ENCODE measurements at regions of chr1 and their contacts with region 1.

Region 1: GRCh38 chr1:163315773-163316374 is 5.9 kb upstream of the NUF2 start:
- DNase-seq: peak in 1 of 2 donors; percentile 22
- H3K4me3 ChIP-seq: no peak overlapping the region
- H3K27ac ChIP-seq: no peak overlapping the region
- H3K4me1 ChIP-seq: peaks cover 0 to 18% (median 2%) of the 10 kb centered on the region in 4 donors
- H3K27me3 ChIP-seq: no peaks in the 10 kb centered on the region
- CTCF ChIP-seq: peak; percentile 71 to 85

Region 2: DNA sequence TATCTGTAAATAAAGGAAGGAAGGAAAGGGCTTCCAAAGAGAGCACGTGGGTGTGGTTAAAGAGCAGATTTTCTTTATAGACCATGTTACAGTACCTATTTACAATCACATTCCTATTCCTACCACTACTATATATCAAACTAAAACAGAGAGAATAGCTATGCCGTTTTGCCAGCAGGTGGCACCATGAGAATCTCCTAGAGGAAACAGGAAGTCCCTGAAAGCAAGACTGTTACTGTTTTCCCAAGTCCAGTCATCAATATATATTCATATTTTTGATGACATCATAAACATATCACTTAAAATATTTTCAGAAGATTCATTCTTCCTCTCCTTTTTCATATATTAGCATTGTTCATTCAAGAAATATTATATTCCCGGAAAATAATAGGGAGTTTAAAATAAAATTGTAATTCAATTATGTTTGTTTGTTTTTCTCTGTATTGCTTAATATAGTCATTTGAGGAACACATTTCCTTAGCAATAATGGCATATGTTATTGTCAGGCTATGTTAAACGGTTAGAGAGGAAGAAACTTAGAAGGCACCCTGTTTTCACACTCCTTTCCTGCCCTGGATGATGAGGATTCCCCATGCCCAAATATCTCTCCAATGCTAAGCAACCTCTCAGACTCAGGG is 461.5 kb before region 1 on chr1:
- intact Hi-C with region 1: loop called (anchors 5 kb)
- DNase-seq: peak; percentile 54 to 74
- H3K4me3 ChIP-seq: no peak overlapping the region
- H3K27ac ChIP-seq: peak overlapping the region; percentile 62 to 88
- H3K4me1 ChIP-seq: peaks cover 0 to 49% (median 10%) of the 10 kb centered on the region in 4 donors
- H3K27me3 ChIP-seq: no peaks in the 10 kb centered on the region
- CTCF ChIP-seq: peak; percentile 64 to 75

Region 3: GRCh38 chr1:162878000-162878596 is 437.8 kb before region 1 on chr1:
- intact Hi-C with region 1: loop called (anchors 5 kb)
- DNase-seq: peak; percentile 45 to 76
- H3K4me3 ChIP-seq: no peak overlapping the region
- H3K27ac ChIP-seq: no peak overlapping the region
- H3K4me1 ChIP-seq: peaks cover 0 to 17% (median under 1%) of the 10 kb centered on the region in 4 donors
- H3K27me3 ChIP-seq: no peaks in the 10 kb centered on the region
- CTCF ChIP-seq: peak; percentile 75 to 89

Region 4: DNA sequence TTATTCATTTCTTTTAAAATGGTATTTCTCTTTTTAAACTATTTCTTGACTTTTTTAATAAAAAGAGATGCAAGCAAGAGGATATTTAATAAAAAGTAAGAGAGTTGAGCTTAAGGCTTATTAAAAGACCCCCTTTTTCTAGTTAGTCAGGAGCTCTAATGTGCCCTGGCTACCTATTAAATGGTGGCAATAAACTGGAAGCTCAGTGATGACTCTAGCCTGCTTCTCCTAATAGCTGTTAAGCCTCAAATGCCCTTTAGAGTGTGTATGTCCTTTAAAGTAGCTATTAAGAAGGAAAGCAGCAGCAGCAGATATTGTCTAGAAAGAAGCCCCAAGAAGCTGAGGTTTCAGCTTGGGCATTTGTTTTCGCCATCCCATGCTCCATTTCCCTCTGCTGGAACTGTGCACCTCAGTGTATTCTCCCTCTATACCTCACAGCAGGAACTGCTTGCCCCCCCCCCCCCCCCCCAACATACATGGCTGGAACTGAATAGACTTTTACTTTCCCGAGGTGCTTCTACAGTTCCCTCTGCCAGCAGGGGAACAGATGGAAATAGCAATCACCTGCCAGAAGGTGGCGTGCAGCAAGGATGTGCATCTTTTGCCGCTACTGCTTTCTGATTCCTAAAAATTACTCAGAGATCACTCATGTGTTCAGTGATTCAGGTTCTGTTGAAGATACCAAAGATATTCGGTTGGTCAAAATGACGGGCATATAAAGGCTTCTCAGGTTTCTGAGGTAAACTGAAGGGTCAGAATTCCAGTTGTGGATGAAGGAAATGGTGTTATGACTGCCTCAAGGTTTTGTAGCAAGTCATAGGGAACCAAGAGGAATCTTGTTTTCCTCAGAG is 244.2 kb before region 1 on chr1:
- intact Hi-C with region 1: loop called (anchors 5 kb)
- DNase-seq: peak; percentile 58 to 82
- H3K4me3 ChIP-seq: peak overlapping the region; percentile 12
- H3K27ac ChIP-seq: peak overlapping the region; percentile 20 to 56
- H3K4me1 ChIP-seq: peaks cover 0 to 37% (median 4%) of the 10 kb centered on the region in 4 donors
- H3K27me3 ChIP-seq: no peaks in the 10 kb centered on the region
- CTCF ChIP-seq: peak; percentile 62 to 64